Vagina (tissue), 2 donors: ENCODE measurements at regions of chr16 and their contacts with region 1.

Region 1: DNA sequence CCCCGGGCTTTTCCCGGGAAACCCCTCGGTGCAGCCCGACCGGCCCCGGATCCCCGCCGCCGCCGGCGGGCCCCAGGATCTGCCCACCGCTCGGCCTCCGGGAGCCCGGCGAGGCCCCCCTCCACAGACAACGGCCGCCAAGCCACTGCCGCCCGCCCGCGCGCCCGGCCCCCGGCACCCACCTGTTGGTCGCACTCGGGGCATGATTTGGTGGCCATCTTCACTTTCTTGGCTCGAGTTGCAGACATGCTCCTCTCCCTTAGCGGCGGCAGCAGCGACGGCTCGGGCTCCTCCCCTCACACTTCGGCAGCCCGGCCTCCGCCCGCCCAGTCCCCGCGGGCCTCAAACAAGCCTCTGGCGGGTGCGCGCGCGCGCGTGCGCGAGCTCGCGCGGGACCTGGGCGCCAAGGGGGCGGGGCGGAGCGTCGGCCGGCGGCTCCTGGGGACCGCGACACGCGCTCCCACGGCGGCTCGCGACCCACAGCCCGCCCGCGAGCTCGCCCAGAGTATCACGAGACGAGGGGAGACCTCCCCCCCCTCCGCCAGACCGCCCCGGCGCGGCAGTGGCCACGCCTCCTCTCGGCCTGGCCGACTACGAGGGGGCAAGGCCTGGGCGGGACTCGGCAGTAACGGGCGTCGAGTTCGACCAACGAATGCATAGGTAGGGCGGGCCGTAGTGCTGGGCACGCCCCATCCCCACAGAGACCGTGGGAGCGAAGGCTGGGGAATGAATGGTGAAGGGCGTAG is at the start of gene C16orf87:
- DNase-seq: peak in 1 of 2 donors; percentile 93
- H3K4me3 ChIP-seq: peak within 1 kb of the TSS; percentile 83 to 86
- H3K27ac ChIP-seq: peak within 1 kb of the TSS; percentile 87
- H3K4me1 ChIP-seq: peaks cover 15% of the 10 kb centered on the region
- H3K27me3 ChIP-seq: no peaks in the 10 kb centered on the region
- CTCF ChIP-seq: no peak
- POLR2A ChIP-seq: peak in 1 of 2 donors; percentile 63
- total RNA-seq, gene C16orf87: 7.9 TPM

Region 2: DNA sequence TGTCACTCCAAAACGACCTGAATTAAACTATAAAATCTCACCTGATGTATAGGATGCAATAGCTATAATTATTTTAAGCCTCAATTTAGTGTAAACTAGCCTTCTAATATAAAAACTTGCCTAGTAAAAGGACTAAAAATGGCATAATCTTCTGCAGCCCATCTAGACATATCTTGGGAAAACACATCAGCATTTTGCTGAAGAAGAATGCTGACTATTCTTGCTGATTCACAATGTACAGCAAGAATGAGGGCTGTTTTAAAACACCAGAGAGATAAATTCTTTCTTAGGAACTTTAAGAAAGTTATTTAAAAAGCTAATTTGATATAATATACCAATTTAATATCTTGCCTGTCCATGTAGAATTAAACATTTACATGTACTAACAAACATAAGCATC is 273.1 kb before region 1 on chr16:
- intact Hi-C with region 1: no loop called
- DNase-seq: no peak
- H3K4me3 ChIP-seq: no peak overlapping the region
- H3K27ac ChIP-seq: no peak overlapping the region
- H3K4me1 ChIP-seq: no peaks in the 10 kb centered on the region
- H3K27me3 ChIP-seq: no peaks in the 10 kb centered on the region
- CTCF ChIP-seq: no peak
- POLR2A ChIP-seq: no peak

Region 3: GRCh38 chr16:46689365-46690280 is 141.5 kb before region 1 on chr16 and contains the start of gene ORC6:
- intact Hi-C with region 1: loop called (anchors 5 kb)
- DNase-seq: no peak
- H3K4me3 ChIP-seq: peak within 1 kb of the TSS; percentile 87 to 99
- H3K27ac ChIP-seq: peak within 1 kb of the TSS; percentile 96
- H3K4me1 ChIP-seq: peaks cover 51% of the 10 kb centered on the region
- H3K27me3 ChIP-seq: no peaks in the 10 kb centered on the region
- CTCF ChIP-seq: peak in 1 of 3 experiments; percentile 16
- POLR2A ChIP-seq: no peak
- total RNA-seq, gene ORC6: 2.2 TPM

Region 4: DNA sequence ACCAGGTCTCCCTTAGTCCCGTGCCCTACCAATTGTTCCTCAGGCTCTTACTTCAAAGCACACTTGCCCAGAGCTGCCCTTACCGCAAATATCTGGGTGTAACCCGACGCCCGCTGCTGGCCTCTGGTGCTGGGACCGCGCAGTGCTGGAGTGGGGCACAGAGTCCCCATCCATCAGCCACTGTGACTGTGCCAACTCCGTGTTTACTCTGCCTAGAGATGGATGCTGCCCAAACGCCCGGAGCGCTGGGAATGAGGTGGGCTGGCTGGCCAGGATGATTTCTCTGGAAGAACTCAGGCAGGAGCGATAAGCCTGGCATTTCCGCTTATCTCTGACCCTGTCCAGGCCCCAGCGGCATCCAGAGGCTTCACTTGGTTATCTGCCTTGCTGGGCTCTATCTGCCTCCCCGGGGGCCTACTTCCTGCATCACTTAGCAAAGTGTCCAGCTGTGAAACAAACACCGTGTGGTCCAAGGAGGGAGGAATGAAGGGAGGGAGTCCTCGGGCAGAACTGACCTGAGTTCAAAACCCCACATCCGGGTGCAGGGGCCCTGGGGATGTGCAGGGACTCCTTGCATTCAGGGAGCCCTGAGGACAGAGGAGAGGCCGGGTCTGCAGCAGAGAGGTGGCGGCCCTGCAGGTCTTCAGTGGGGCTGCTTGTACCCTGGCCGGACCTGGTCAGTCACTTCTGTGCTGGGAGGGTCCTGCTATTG is 73.6 kb before region 1 on chr16:
- intact Hi-C with region 1: no loop called
- DNase-seq: no peak
- H3K4me3 ChIP-seq: no peak overlapping the region
- H3K27ac ChIP-seq: no peak overlapping the region
- H3K4me1 ChIP-seq: no peaks in the 10 kb centered on the region
- H3K27me3 ChIP-seq: no peaks in the 10 kb centered on the region
- CTCF ChIP-seq: no peak
- POLR2A ChIP-seq: no peak